Mammary epithelial cell (primary cell): ENCODE measurements at regions of chr13 and their contacts with region 1.

Region 1: DNA sequence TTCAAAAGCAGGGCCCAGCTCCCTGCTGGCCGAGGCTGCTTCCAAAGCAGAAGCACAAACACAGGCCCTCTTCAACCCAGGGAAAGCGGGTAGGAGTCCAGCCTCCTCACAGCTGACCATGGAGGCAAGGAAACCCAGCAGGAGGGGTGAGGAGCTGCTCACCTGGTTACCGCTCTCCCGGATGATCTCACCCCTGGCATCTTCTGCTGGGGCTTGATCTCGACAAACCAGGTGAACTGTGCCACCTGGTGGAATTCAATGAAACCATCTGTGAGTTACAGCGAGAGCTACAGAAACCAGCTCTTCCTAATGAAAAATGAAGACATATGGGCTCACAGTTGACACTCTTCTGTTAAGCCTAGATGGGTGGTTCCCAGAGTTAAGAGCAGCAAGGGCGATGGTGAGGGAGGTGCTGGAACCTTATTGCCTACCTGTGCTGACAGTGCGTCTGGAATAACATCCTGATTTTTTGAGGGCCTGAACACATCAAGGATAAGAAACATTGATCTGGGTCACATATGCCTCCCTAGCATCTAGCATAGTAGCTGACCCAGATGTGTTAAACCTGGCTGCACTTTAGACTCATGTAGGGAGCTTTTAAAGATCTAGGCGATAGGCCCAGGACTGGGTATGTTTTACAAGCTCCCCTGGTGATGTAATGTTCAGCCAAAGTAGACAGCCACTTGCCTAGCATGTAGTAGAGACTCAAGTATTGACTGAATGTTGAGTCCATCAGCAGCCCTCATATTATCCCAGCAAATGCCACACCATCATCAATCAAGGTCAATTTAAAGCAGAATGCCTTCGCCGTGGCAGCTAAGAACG is 6.1 kb downstream of the DHRS12 start:
- DNase-seq: peak; percentile 74
- H3K4me3 ChIP-seq: no peak overlapping the region
- H3K27ac ChIP-seq: no peak overlapping the region
- H3K4me1 ChIP-seq: peaks cover 25% of the 10 kb centered on the region
- H3K27me3 ChIP-seq: no peaks in the 10 kb centered on the region
- CTCF ChIP-seq: peak; percentile 49 to 71

Region 2: GRCh38 chr13:51134763-51135365 is 663.0 kb before region 1 on chr13:
- CTCF ChIA-PET with region 1: no interaction called
- dilution Hi-C with region 1: no loop called
- in situ Hi-C with region 1: loop called in 1 of 2 experiments (anchors 10 kb)
- intact Hi-C with region 1: no loop called
- DNase-seq: no peak
- H3K4me3 ChIP-seq: no peak overlapping the region
- H3K27ac ChIP-seq: no peak overlapping the region
- H3K4me1 ChIP-seq: no peaks in the 10 kb centered on the region
- H3K27me3 ChIP-seq: no peaks in the 10 kb centered on the region
- CTCF ChIP-seq: no peak

Region 3: GRCh38 chr13:51222037-51222685 is 575.7 kb before region 1 on chr13 and contains the start of gene FAM124A:
- CTCF ChIA-PET with region 1: no interaction called
- dilution Hi-C with region 1: no loop called
- in situ Hi-C with region 1: no loop called
- intact Hi-C with region 1: loop called (anchors 1 kb)
- DNase-seq: no peak
- H3K4me3 ChIP-seq: peak within 1 kb of the TSS; percentile 40 to 82 (median 60)
- H3K27ac ChIP-seq: no peak within 1 kb of the TSS
- H3K4me1 ChIP-seq: peaks cover 11% of the 10 kb centered on the region
- H3K27me3 ChIP-seq: peaks cover 19% of the 10 kb centered on the region
- CTCF ChIP-seq: peak; percentile 11 to 20
- total RNA-seq, gene FAM124A: 0.12 to 0.33 TPM

Region 4: DNA sequence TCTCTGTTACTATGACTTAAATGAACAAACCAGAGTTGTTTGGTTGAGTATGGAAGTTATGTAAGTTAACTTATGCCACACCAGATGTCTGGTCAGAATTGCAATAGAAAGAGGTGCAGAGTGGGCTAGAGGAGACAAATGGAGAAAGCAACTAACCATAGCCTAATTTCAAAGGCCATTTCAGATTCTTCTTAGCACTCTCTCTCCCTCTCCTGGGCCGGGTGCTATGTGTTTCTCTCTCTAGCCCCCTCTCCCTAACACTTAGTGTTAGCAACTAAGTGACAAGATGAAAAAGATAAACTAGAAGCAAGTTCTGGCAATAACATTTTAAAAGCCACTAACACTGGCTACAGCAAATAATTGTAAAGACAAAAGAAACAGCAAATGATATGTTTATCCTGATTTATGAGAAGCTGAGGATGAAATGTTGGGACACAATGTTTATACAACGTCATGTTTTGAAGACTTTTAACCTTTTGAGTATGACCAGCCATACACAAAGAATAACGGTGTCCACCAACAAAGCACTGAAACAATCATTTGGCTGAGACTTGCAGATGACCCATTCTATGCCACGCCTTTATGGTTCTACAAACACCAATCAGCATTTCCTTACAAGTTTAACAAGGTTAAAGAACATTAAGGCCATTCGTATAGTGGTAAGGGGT is 439.8 kb before region 1 on chr13:
- CTCF ChIA-PET with region 1: no interaction called
- dilution Hi-C with region 1: no loop called
- in situ Hi-C with region 1: no loop called
- intact Hi-C with region 1: loop called (anchors 10 kb)
- DNase-seq: no peak
- H3K4me3 ChIP-seq: no peak overlapping the region
- H3K27ac ChIP-seq: no peak overlapping the region
- H3K4me1 ChIP-seq: no peaks in the 10 kb centered on the region
- H3K27me3 ChIP-seq: no peaks in the 10 kb centered on the region
- CTCF ChIP-seq: no peak

Region 5: DNA sequence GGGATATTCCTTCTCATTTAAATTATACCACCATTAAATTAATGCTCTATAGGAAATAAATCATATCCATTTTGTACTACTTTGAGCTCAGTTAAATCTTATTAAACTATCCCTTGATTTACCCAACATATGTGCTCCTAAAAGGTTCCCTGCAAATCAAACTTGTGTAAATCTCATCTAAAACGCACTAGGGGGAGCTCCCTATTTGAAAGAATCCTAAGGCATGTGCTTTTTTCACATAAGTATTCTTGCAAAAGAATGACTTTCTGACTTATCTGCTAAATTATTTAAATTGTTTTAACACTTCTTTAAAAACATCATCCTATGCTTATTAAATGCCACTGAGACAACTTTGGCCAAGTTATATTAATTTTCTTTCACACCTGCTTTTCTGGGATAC is 353.0 kb before region 1 on chr13:
- CTCF ChIA-PET with region 1: interaction called, 3 read pairs
- dilution Hi-C with region 1: loop called (anchors 25 kb)
- in situ Hi-C with region 1: loop called (anchors 10 kb)
- intact Hi-C with region 1: loop called (anchors 2 kb)
- DNase-seq: no peak
- H3K4me3 ChIP-seq: no peak overlapping the region
- H3K27ac ChIP-seq: no peak overlapping the region
- H3K4me1 ChIP-seq: peaks cover under 1% of the 10 kb centered on the region
- H3K27me3 ChIP-seq: no peaks in the 10 kb centered on the region
- CTCF ChIP-seq: peak; percentile 18 to 39

Region 6: GRCh38 chr13:51583875-51584730 is 213.8 kb before region 1 on chr13 and contains the start of gene WDFY2:
- CTCF ChIA-PET with region 1: no interaction called
- dilution Hi-C with region 1: no loop called
- in situ Hi-C with region 1: no loop called
- intact Hi-C with region 1: loop called (anchors 2 kb)
- DNase-seq: peak; percentile 100
- H3K4me3 ChIP-seq: peak within 1 kb of the TSS; percentile 89 to 96 (median 96)
- H3K27ac ChIP-seq: peak within 1 kb of the TSS; percentile 88
- H3K4me1 ChIP-seq: peaks cover 7% of the 10 kb centered on the region
- H3K27me3 ChIP-seq: no peaks in the 10 kb centered on the region
- CTCF ChIP-seq: no peak
- total RNA-seq, gene WDFY2: 20.7 to 32.9 TPM